ENCODE measurements at regions of chr22 and their contacts with region 1.

Region 1: DNA sequence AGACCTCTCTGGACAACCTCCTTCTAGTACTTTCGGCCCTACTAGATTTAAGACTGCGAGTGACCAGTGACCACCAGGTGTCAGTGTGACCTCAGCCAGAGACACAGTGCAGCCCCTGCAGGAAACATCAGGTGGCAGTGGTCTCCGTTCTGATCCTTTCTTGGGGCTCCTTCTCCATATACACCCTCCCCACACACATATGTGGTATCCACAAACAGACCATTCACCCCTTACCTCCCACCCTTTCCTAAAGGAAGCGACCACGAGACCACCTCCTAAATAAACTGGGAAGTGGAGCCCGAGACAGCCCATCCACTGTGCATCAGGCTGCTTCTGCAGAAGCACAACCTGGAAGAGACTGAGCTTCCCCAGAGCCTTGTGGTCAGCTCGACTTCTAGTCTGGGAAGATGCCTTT is 38.5 kb upstream of the CYP2D6 start:
- DNase-seq: peak; percentile 73
- H3K4me3 ChIP-seq: no peak overlapping the region
- H3K27ac ChIP-seq: no peak overlapping the region
- H3K4me1 ChIP-seq: peaks cover 11% of the 10 kb centered on the region
- H3K27me3 ChIP-seq: no peaks in the 10 kb centered on the region
- CTCF ChIP-seq: peak; percentile 77

Region 2: GRCh38 chr22:42269407-42270177 is 100.5 kb after region 1 on chr22:
- intact Hi-C with region 1: loop called (anchors 10 kb)
- DNase-seq: peak; percentile 87
- H3K4me3 ChIP-seq: peak overlapping the region; percentile 96
- H3K27ac ChIP-seq: peak overlapping the region; percentile 91
- H3K4me1 ChIP-seq: peaks cover 10% of the 10 kb centered on the region
- H3K27me3 ChIP-seq: no peaks in the 10 kb centered on the region
- CTCF ChIP-seq: no peak

Region 3: DNA sequence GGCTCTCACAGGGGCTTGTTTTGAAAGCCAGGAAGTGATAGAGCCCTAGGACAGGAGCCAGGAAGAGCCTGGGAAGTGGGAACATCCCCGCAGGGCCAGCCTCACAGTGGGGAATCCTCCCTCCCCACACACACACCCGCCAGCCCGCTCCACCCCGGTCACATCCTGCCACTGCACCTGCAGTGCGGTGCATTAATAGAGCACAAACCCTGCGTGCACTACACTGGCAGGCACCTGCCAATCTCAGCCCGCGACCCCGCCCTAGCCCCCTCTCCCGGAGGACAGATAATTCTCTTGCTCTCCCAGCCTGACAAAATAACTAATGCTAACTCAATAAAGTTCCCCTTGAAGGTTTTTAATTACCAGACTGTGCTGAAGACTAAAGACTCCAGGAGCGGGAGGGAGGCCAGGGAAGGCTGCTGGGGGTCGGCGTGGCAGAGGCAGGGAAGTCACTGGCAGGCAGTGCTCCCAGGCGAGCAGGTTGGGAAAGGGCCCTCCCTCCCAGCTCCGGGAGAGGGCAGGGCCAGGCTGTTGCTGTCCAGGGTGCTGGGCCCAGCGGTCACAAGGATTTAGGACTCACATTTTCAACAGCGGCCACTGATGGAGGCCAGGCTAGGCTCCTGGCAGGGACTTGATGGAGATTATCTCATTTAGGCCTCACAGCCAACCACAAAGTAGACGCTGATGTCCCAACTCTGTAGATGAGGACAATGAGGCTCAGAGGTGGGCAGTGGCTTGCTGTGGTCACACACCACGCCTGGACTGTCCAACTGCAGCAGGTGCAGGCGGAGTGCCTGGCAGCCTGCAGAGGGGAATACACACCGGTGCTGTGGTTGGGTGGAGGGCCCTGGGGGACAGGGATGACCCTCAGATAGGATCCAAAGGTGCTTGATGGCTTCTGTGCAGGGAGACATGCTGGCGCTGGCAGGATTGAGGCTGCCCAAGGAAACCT is 125.2 kb after region 1 on chr22:
- intact Hi-C with region 1: no loop called
- DNase-seq: peak; percentile 77
- H3K4me3 ChIP-seq: no peak overlapping the region
- H3K27ac ChIP-seq: no peak overlapping the region
- H3K4me1 ChIP-seq: peaks cover 10% of the 10 kb centered on the region
- H3K27me3 ChIP-seq: no peaks in the 10 kb centered on the region
- CTCF ChIP-seq: no peak

Region 4: DNA sequence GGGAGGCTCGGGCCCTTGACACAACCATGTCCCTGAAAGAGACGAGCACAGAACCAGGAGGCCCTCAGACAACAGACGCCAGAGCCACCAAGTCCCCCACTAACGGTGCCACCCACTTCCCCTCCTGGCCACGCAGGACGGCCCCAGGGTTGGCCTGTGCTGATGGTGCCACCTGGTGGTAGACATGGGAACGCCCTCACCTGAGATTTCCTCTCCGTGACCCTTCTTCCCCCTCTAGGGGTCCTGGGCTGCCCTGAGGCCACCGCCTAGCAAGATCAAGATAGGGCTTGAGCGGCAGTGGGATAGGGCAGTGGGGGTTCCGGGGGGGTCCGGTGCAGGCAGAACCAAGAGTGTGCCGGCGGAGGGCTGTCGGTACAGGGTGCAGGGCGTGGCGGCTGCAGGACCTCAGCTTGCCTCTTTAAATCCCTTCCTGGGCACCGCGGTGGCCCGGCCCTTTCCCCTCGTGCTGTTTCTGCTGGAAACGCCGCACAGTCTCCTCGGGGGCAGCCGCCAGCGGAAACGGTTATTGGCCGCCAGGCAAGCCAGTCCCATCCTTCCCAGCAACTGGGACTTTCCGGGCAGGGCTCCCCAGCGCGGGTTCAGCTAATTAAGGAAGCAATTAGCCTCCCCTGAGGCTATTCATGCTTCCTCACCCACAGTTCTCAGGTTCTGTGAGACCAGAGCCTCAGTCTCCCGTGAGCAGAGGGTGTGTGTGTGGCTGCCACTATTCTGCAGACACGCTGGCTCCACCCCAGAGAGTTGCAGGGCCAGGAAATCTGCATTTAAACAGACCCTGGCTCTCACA is 268.6 kb after region 1 on chr22:
- intact Hi-C with region 1: loop called (anchors 2 kb)
- DNase-seq: peak; percentile 84
- H3K4me3 ChIP-seq: peak overlapping the region; percentile 62
- H3K27ac ChIP-seq: peak overlapping the region; percentile 55
- H3K4me1 ChIP-seq: no peaks in the 10 kb centered on the region
- H3K27me3 ChIP-seq: no peaks in the 10 kb centered on the region
- CTCF ChIP-seq: peak; percentile 92

Measured in colonic mucosa (tissue), 4 donors.